Activated CD8-positive, alpha-beta memory T cell treated with anti-CD3 and anti-CD28 coated beads, Interleukin-2, amount 10 ng/mL, durations not matched to agents 7 days and 5 days (primary cell): ENCODE measurements at regions of chr17 and their contacts with region 1.

Region 1: GRCh38 chr17:47970704-47971463 is at the start of gene CDK5RAP3:
- DNase-seq: peak; percentile 100
- ATAC-seq: peak; percentile 97
- H3K4me3 Mint-ChIP-seq: peak within 1 kb of the TSS; percentile 93
- H3K27ac Mint-ChIP-seq: peak within 1 kb of the TSS; percentile 85
- H3K4me1 Mint-ChIP-seq: peaks cover 28% of the 10 kb centered on the region
- H3K27me3 Mint-ChIP-seq: peaks cover 2% of the 10 kb centered on the region
- total RNA-seq, gene CDK5RAP3: 215 to 262 TPM

Region 2: DNA sequence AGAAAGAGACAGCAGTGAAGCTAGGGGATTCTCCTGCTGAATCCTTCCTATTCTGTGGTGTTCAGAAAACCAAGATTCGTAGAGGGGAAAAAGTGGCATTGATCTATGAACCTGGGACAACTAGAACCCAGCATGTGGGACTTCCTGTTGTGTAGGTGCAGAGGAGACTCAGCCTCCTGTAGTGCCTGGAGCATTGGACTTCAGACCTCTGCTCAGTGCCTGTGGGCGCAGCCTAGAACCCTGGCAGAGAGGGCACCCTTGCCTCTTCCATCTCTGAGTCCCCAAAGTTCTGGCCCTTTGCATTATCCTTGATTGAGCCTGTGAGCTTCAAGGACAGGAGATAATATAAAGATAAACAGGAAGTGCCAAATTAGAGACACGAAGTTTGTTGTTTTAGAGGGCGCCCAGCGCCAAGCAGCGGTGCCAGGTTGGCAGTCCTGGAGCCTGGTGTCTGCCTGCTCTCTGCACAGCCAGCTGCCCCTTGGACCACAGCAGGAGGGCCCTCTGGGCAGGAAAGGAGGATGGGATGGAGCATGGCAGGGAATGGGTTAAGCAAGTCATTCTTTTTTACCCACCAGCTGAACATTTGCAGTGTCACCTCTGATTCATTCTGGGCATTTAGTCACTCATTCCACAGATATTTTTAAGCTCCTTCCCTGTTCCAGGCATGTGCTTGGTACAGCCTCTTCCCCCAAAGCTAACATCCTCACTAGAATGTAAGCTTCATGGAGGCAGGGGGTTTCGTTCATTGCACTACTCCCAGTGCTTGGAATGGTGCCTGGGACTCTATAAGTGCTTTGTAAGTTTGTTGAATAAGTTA is 108.1 kb before region 1 on chr17:
- CTCF ChIA-PET with region 1: no interaction called
- DNase-seq: no peak
- ATAC-seq: no peak
- H3K4me3 Mint-ChIP-seq: no peak overlapping the region
- H3K27ac Mint-ChIP-seq: no peak overlapping the region
- H3K4me1 Mint-ChIP-seq: peaks cover 8% of the 10 kb centered on the region
- H3K27me3 Mint-ChIP-seq: peaks cover 19% of the 10 kb centered on the region

Region 3: DNA sequence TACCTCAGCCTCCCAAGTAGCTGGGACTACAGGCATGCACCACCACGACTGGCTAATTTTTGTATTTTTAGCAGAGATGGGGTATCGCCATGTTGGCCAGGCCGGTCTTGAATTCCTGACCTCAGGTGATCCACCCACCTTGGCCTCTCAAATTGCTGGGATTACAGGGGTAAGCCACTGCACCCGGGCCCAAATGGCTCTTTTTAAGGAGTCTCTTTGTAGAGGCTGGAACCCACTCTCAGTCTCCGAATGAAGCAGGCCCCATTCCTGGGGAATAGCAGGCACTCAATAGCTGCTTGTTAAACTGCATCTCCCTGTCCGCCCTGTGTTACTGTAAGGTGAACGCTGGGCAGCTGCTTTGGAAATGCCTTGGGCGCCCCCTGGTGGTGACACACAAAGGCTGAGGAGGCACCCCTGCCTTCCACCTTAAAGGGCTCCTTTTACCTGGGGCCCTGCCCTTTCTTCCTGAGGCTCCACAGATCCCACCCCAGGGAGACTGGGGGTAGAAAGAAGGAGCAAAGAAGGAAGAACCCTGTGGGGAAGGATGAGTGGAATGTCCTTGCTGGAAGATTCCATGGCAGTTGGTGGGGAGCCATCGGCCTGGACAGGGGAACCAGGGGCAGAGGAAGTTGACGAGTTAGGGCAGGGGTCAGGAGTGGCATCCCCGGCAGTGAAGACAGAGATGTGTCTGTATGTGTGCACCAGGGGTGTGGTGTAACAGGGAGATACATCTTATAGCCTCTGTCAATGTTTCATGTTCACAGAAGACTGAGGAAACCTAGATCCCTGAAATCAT is 81.0 kb before region 1 on chr17:
- CTCF ChIA-PET with region 1: interaction called, 20 read pairs
- DNase-seq: peak; percentile 93
- ATAC-seq: peak; percentile 99
- H3K4me3 Mint-ChIP-seq: no peak overlapping the region
- H3K27ac Mint-ChIP-seq: no peak overlapping the region
- H3K4me1 Mint-ChIP-seq: peaks cover 22% of the 10 kb centered on the region
- H3K27me3 Mint-ChIP-seq: no peaks in the 10 kb centered on the region

Region 4: DNA sequence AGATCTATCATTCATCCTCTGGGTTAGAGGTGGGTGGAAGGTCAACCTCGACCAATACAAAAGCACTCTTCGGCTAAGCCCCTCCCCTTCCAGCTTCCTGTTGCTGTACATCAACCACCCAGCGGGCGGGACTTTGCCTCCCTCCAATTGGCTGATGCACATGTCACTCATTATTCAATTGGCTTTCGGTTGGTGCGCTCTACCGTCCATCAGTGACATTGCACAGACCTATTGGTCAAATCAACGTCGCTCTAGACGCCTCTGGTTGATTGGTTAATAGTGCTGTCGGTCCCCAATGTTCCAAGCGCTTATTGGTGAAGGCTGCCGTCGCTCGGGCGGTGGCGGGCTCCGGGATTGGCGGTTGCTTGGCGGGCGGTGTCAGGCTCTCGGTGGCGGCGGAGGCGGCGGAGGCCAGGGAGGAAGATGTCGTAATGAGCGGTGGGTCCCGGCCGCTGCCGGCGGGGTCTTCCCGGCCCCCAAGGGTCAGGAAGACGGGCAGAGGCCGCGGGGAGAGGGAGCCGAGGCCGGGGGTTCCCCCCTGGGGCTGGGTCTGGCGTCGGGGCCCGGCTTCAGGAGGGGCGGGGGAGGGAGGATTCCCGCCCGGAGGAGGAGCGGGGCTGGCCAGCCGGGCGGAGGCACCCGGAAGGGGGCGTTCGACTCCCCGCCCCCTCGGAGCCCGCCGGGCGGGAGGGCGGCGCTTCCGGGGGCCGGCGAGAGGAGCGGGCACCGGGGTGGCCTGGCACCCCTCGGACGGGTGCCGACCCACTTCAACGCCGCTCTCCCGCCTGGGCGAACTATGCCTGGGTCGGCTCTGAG is 74.8 kb before region 1 on chr17 and contains the start of gene SP2:
- CTCF ChIA-PET with region 1: interaction called, 20 read pairs
- DNase-seq: peak; percentile 100
- ATAC-seq: peak; percentile 93
- H3K4me3 Mint-ChIP-seq: peak within 1 kb of the TSS; percentile 83
- H3K27ac Mint-ChIP-seq: peak within 1 kb of the TSS; percentile 95
- H3K4me1 Mint-ChIP-seq: peaks cover 47% of the 10 kb centered on the region
- H3K27me3 Mint-ChIP-seq: no peaks in the 10 kb centered on the region
- total RNA-seq, gene SP2: 21.7 to 22.9 TPM

Region 5: DNA sequence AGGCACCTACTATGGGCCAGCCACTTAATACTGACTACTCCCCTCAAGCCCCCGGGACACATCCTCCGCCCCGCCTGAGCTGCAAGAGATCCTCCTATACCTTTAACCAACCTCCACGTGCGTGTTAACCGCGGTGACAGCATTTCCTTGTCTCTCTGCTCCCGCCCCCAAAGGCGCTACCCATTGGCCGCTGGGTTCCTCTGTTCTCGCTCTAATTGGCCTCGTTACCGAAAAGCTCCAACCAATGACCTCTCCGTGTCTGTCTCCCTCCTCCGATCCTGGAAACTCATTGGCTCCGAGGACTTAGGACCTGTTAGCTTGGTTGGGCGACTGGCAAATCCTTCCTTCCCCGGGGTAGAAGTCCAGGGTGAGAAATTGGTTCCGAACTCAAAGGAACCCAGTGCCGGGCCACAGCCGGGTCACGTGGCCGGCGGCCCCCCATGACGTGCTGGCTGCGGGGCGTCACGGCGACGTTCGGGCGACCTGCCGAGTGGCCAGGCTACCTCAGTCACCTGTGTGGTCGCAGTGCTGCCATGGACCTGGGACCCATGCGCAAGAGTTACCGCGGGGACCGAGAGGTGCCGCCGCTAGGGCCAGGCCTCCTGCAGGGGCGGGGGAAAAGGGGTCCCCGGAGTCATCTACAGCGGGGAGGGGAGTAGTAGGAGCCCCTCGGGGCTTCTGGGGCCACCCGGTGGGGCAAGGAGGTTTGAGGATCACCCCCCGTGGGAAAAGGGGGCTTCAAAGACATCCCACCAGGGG is 29.5 kb before region 1 on chr17 and contains the start of gene PNPO:
- CTCF ChIA-PET with region 1: interaction called, 383 read pairs
- DNase-seq: peak; percentile 99
- ATAC-seq: peak; percentile 99
- H3K4me3 Mint-ChIP-seq: peak within 1 kb of the TSS; percentile 88
- H3K27ac Mint-ChIP-seq: peak within 1 kb of the TSS; percentile 92
- H3K4me1 Mint-ChIP-seq: peaks cover 59% of the 10 kb centered on the region
- H3K27me3 Mint-ChIP-seq: no peaks in the 10 kb centered on the region
- total RNA-seq, gene PNPO: 28.0 to 30.4 TPM